Colonic mucosa (tissue), 4 donors: ENCODE measurements at regions of chr15 and their contacts with region 1.

Region 1: DNA sequence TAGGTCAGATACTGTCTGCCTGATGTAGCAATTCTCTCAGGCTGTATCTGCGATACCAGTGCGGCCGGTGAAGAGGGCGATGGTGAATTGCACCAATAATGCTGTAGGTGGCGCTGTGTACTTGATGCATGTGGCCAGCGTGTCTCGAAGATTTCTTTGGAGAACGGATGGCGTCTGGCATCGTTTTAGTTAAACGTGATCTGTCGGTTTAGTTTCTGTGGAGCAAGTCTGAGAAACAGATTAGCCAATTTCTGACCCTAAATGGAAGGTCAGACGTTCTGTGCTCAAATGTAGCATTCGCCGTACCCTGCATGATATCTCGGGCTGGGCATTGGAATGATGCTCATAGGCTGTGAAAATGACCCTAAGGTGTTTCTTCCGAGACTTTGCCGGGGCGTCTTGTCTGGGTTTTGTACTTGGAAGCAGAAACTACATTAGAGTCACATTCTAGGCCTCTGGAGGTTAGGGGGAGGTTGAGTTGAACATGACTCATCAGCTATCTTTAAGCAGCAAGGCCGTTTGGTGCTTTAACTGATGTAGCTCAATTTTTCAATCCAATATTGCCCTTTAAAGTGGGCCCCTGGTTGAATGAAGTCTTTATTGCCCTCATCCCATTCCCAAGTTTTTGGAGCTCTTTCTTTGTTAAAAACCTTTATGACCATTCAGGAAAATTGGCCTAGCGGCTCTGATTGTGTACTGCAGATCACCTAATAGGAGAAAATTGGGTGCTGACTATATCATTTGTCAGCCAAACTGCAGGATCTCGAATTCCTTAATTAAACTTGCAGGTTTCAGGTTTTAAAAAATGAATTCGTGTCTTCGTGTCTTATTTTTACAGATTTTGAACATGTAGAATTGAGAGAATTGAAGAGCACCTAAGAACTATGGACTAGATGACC is 80.0 kb downstream of the SQOR start:
- DNase-seq: peak; percentile 70
- H3K4me3 ChIP-seq: no peak overlapping the region
- H3K27ac ChIP-seq: no peak overlapping the region
- H3K4me1 ChIP-seq: no peaks in the 10 kb centered on the region
- H3K27me3 ChIP-seq: no peaks in the 10 kb centered on the region
- CTCF ChIP-seq: peak; percentile 84

Region 2: DNA sequence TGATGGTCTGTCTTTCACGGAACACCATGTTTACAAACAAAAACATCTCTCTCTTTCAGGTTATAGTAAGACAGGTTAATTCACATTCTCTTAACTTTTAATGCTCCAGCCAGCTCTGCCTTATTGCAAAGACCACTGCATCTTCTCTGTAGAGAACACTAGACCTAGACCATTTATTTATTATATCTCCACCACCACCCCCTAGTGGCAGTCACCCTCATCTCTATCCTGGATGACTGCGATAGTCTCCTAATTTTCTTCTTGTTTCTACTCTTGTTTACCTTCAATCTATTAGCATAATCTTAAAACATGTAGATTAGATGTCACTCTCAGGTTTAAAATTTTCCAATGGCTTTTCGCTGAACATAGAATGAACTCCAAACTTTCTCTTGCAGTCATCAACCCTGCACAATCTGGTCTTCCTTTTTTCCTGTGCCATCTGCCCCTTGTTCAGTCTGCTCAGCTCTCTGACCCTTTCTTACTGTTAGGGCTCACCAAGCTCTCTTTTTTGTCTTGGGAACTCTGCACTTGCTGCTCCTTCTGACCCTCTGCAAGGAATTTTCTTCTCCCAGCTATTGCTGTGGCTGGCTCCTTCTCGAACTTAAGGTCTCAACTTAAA is 75.6 kb after region 1 on chr15:
- intact Hi-C with region 1: loop called (anchors 2 kb)
- DNase-seq: peak; percentile 56
- H3K4me3 ChIP-seq: no peak overlapping the region
- H3K27ac ChIP-seq: no peak overlapping the region
- H3K4me1 ChIP-seq: no peaks in the 10 kb centered on the region
- H3K27me3 ChIP-seq: no peaks in the 10 kb centered on the region
- CTCF ChIP-seq: peak; percentile 47

Region 3: GRCh38 chr15:45812200-45812599 is 97.4 kb after region 1 on chr15:
- intact Hi-C with region 1: no loop called
- DNase-seq: no peak
- H3K4me3 ChIP-seq: no peak overlapping the region
- H3K27ac ChIP-seq: no peak overlapping the region
- H3K4me1 ChIP-seq: no peaks in the 10 kb centered on the region
- H3K27me3 ChIP-seq: no peaks in the 10 kb centered on the region
- CTCF ChIP-seq: no peak